ENCODE measurements at regions of chr10 and their contacts with region 1.

Region 1: GRCh38 chr10:33008499-33009243 is 50.6 kb upstream of the ITGB1 start:
- DNase-seq: peak; percentile 67
- H3K4me3 ChIP-seq: no peak overlapping the region
- H3K27ac ChIP-seq: no peak overlapping the region
- H3K4me1 ChIP-seq: peaks cover 4 to 33% (median 15%) of the 10 kb centered on the region in 4 donors
- H3K27me3 ChIP-seq: no peaks in the 10 kb centered on the region
- CTCF ChIP-seq: peak; percentile 96 to 99 (median 98)
- EP300 ChIP-seq: no peak
- POLR2A ChIP-seq: no peak

Region 2: GRCh38 chr10:32437334-32437733 is 571.3 kb before region 1 on chr10:
- in situ Hi-C with region 1: no loop called
- intact Hi-C with region 1: no loop called
- DNase-seq: no peak
- H3K4me3 ChIP-seq: no peak overlapping the region
- H3K27ac ChIP-seq: no peak overlapping the region
- H3K4me1 ChIP-seq: peaks cover 0 to 12% (median 4%) of the 10 kb centered on the region in 4 donors
- H3K27me3 ChIP-seq: no peaks in the 10 kb centered on the region
- CTCF ChIP-seq: no peak
- EP300 ChIP-seq: no peak
- POLR2A ChIP-seq: no peak

Region 3: DNA sequence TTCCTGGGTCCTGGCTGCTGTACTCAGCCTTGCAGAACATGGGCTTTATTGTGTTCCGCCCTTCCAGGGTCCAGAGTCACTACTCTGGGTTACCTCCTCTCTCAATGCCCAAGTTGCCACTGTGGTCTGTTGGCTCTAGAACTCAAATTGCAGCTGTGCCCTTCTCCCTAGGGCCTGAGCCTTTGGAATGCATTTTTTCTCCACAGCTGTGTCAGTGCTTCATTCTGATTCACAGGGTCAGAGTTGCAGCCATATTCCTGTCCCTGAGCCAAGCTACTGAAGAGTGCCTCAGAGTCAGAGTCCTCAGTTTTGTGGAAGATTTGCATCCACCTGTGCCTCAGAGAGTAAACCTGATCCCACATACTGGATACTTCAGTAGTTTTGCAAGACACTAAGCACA is 218.2 kb before region 1 on chr10:
- in situ Hi-C with region 1: loop called (anchors 5 to 10 kb)
- intact Hi-C with region 1: loop called (anchors 2 kb)
- DNase-seq: no peak
- H3K4me3 ChIP-seq: no peak overlapping the region
- H3K27ac ChIP-seq: no peak overlapping the region
- H3K4me1 ChIP-seq: no peaks in the 10 kb centered on the region
- H3K27me3 ChIP-seq: no peaks in the 10 kb centered on the region
- CTCF ChIP-seq: no peak
- EP300 ChIP-seq: no peak
- POLR2A ChIP-seq: no peak

Region 4: DNA sequence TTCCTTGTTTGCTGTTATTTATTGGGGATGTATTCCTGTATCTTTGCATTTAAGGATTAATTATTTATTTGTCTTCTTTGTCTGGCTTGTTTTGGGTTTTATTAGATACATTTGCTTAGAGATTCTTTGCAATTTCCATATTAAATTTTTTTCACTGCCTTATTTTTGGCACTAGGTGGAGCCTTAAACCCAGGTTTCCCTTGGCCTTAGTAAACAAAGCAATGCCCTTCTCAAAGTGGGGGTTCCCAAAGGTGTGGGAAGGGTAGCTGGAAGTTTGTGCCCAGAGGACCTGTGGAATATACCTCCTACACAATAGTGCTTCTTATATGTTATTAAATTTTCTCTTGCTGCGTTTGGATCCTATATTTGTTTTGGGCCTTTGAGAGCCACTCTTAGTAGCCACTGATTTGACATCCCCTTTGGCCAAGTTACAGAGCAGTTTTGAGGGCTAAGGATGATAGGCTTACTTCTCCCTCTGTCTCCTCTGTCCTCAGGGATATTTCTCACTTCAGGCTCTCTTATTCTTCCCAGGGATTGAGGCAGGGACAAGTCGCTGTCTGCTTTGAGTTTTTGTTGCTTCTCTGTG is 213.0 kb before region 1 on chr10:
- in situ Hi-C with region 1: loop called (anchors 5 to 10 kb)
- intact Hi-C with region 1: loop called (anchors 2 kb)
- DNase-seq: no peak
- H3K4me3 ChIP-seq: no peak overlapping the region
- H3K27ac ChIP-seq: no peak overlapping the region
- H3K4me1 ChIP-seq: no peaks in the 10 kb centered on the region
- H3K27me3 ChIP-seq: no peaks in the 10 kb centered on the region
- CTCF ChIP-seq: peak; percentile 67 to 81 (median 71)
- EP300 ChIP-seq: no peak
- POLR2A ChIP-seq: no peak

Region 5: GRCh38 chr10:32943854-32944661 is 64.6 kb before region 1 on chr10:
- in situ Hi-C with region 1: loop called in 1 of 4 experiments (anchors 10 kb)
- intact Hi-C with region 1: no loop called
- DNase-seq: peak; percentile 44
- H3K4me3 ChIP-seq: no peak overlapping the region
- H3K27ac ChIP-seq: peak overlapping the region; percentile 20 to 79 (median 40)
- H3K4me1 ChIP-seq: peaks cover 10 to 65% (median 41%) of the 10 kb centered on the region in 4 donors
- H3K27me3 ChIP-seq: no peaks in the 10 kb centered on the region
- CTCF ChIP-seq: no peak
- EP300 ChIP-seq: no peak
- POLR2A ChIP-seq: no peak

Region 6: GRCh38 chr10:32958085-32959005 is 50.3 kb before region 1 on chr10 and contains the start of gene ITGB1:
- in situ Hi-C with region 1: no loop called
- intact Hi-C with region 1: loop called (anchors 10 kb)
- DNase-seq: peak; percentile 97
- H3K4me3 ChIP-seq: peak within 1 kb of the TSS; percentile 84 to 100 (median 91)
- H3K27ac ChIP-seq: peak within 1 kb of the TSS; percentile 96 to 99 (median 98)
- H3K4me1 ChIP-seq: peaks cover 5 to 66% (median 52%) of the 10 kb centered on the region in 4 donors
- H3K27me3 ChIP-seq: no peaks in the 10 kb centered on the region
- CTCF ChIP-seq: no peak
- EP300 ChIP-seq: no peak
- POLR2A ChIP-seq: peak; percentile 99
- total RNA-seq, gene ITGB1: 135 to 362 (median 252) TPM